CD4-positive, alpha-beta memory T cell (primary cell): ENCODE measurements at regions of chr9 and their contacts with region 1.

Region 1: GRCh38 chr9:86202338-86202882 is 57.0 kb downstream of the C9orf153 start:
- DNase-seq: peak in 4 of 5 donors; percentile 14 to 33 (median 24)
- H3K4me3 ChIP-seq: no peak overlapping the region
- H3K4me3 Mint-ChIP-seq: no peak overlapping the region
- H3K27ac ChIP-seq: no peak overlapping the region
- H3K27ac Mint-ChIP-seq: peak overlapping the region in 1 of 7 donors; percentile 17
- H3K4me1 ChIP-seq: no peaks in the 10 kb centered on the region
- H3K4me1 Mint-ChIP-seq: peaks cover 0 to 5% (median under 1%) of the 10 kb centered on the region in 4 donors
- H3K27me3 ChIP-seq: no peaks in the 10 kb centered on the region
- H3K27me3 Mint-ChIP-seq: peaks cover 0 to 4% of the 10 kb centered on the region in 2 donors

Region 2: GRCh38 chr9:85600675-85601263 is 601.6 kb before region 1 on chr9:
- CTCF ChIA-PET with region 1: no interaction called
- POLR2A ChIA-PET with region 1: no interaction called
- intact Hi-C with region 1: no loop called
- DNase-seq: peak in 2 of 5 donors; percentile 2 to 3
- H3K4me3 ChIP-seq: no peak overlapping the region
- H3K4me3 Mint-ChIP-seq: no peak overlapping the region
- H3K27ac ChIP-seq: no peak overlapping the region
- H3K27ac Mint-ChIP-seq: peak overlapping the region in 2 of 7 donors; percentile 66 to 67
- H3K4me1 ChIP-seq: no peaks in the 10 kb centered on the region
- H3K4me1 Mint-ChIP-seq: peaks cover 4 to 17% (median 12%) of the 10 kb centered on the region in 4 donors
- H3K27me3 ChIP-seq: no peaks in the 10 kb centered on the region
- H3K27me3 Mint-ChIP-seq: no peaks in the 10 kb centered on the region

Region 3: DNA sequence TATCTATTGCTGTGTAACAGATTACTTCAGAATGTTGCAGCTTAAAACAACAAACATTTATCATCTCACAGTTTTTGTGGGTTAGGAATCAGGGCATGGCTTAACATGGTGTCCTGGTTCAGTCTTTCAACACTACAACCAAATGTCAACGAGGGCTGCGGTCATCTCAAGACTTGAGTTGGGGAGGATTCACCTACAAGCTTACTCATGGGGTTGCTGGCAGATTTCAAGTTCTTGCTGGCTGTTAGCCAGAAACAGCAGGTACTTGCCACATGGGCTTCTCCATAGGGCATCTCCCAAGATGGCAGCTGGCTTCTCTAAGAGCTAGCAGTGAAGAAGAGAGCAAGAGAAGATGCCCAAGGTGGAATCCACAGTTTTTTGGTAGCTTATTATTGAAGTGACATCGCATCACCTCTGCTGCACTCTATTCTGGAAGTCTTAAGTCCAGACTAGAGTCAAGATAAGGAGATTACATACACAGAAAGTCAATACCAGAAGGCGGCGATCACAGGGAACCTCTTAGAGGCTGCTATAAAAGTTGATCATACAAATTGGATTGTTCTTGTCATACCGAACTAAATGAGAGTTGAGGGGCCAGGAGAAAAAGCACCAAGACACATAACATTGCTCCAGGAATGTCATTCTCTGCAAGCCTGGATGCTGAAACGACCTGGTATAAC is 14.8 kb after region 1 on chr9:
- CTCF ChIA-PET with region 1: interaction called, 11 read pairs
- POLR2A ChIA-PET with region 1: no interaction called
- intact Hi-C with region 1: no loop called
- DNase-seq: no peak
- H3K4me3 ChIP-seq: no peak overlapping the region
- H3K4me3 Mint-ChIP-seq: no peak overlapping the region
- H3K27ac ChIP-seq: no peak overlapping the region
- H3K27ac Mint-ChIP-seq: no peak overlapping the region
- H3K4me1 ChIP-seq: no peaks in the 10 kb centered on the region
- H3K4me1 Mint-ChIP-seq: no peaks in the 10 kb centered on the region
- H3K27me3 ChIP-seq: no peaks in the 10 kb centered on the region
- H3K27me3 Mint-ChIP-seq: peaks cover 2 to 3% of the 10 kb centered on the region in 2 donors

Region 4: GRCh38 chr9:86246752-86247161 is 44.3 kb after region 1 on chr9:
- CTCF ChIA-PET with region 1: no interaction called
- POLR2A ChIA-PET with region 1: no interaction called
- intact Hi-C with region 1: no loop called
- DNase-seq: no peak
- H3K4me3 ChIP-seq: no peak overlapping the region
- H3K4me3 Mint-ChIP-seq: no peak overlapping the region
- H3K27ac ChIP-seq: no peak overlapping the region
- H3K27ac Mint-ChIP-seq: no peak overlapping the region
- H3K4me1 ChIP-seq: no peaks in the 10 kb centered on the region
- H3K4me1 Mint-ChIP-seq: peaks cover 0 to 2% (median 0%) of the 10 kb centered on the region in 4 donors
- H3K27me3 ChIP-seq: no peaks in the 10 kb centered on the region
- H3K27me3 Mint-ChIP-seq: peaks cover 6 to 8% of the 10 kb centered on the region in 2 donors

Region 5: GRCh38 chr9:86756576-86757381 is 554.4 kb after region 1 on chr9:
- CTCF ChIA-PET with region 1: no interaction called
- POLR2A ChIA-PET with region 1: no interaction called
- intact Hi-C with region 1: no loop called
- DNase-seq: no peak
- H3K4me3 ChIP-seq: no peak overlapping the region
- H3K4me3 Mint-ChIP-seq: no peak overlapping the region
- H3K27ac ChIP-seq: no peak overlapping the region
- H3K27ac Mint-ChIP-seq: no peak overlapping the region
- H3K4me1 ChIP-seq: no peaks in the 10 kb centered on the region
- H3K4me1 Mint-ChIP-seq: no peaks in the 10 kb centered on the region
- H3K27me3 ChIP-seq: no peaks in the 10 kb centered on the region
- H3K27me3 Mint-ChIP-seq: peaks cover 0 to 5% of the 10 kb centered on the region in 2 donors